ENCODE measurements at regions of chr7 and their contacts with region 1.

Region 1: DNA sequence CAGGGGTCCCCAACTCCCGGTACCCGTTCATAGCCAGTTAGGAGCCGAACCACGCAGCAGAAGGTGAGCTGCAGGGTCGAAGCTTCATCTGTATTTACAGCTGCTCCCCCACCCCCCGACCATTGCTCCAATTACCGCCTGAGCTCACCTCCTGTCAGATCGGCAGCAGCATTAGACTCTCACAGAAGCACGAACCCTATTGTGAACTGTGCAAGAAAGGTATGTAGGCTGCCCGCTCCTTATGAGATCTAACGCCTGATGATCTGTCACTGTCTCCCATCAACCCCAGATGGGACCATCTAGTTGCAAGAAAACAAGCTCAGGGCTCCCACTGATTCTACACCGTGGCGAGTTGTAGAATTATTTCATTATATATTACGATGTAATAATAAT is 14.6 kb upstream of the AZGP1 start:
- DNase-seq: no peak
- ATAC-seq: no peak
- H3K4me3 ChIP-seq: no peak overlapping the region
- H3K27ac ChIP-seq: no peak overlapping the region
- H3K4me1 ChIP-seq: no peaks in the 10 kb centered on the region
- CTCF ChIP-seq: no peak
- EP300 ChIP-seq: no peak
- POLR2A ChIP-seq: no peak
- RAD21 ChIP-seq: no peak

Region 2: DNA sequence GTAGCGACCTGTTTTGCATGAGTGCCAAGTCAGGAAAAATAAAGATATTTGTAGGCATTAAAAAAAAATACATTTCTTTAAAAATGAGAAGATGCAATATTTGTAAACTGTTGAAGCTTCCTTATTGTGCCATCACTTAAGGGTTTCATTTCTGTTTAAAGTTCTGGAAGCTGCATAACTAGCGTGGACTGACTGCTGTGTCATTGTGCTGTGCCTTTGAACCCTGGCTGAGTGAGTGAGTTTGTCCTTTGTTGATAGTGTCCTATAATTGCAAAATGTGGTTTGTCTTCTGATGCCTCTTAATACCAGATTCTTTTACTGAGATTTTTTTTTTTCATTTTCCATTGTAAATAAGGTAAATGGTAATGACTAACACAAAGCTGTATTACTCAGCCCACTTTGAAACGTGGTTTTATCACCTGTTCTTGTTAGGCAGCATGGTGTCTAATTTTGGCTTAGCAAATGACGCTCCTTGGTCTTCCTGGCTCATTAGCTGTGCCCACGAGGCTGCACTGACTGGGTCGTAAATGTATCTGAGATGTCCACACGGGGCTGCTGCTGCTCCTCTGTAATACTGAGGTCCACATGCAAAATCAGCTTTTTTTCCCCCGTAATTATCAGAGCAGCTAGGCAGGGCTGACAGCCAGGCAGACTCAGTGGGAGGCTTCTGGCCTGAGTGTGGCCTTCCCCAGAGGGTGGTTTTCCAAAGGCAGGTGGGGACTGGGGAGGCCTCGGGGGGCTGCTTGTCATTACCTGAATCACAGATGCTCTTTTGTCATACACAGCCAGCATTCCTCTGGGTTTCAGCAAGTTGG is 359.0 kb before region 1 on chr7:
- CTCF ChIA-PET with region 1: interaction called, 39 read pairs
- POLR2A ChIA-PET with region 1: interaction called, 3 read pairs
- DNase-seq: peak; percentile 48 to 56
- ATAC-seq: peak; percentile 86 to 87
- H3K4me3 ChIP-seq: no peak overlapping the region
- H3K27ac ChIP-seq: peak overlapping the region in 1 of 2 experiments; percentile 15; a peak in 2 of 6 replicates
- H3K4me1 ChIP-seq: no peaks in the 10 kb centered on the region
- CTCF ChIP-seq: peak; percentile 63
- EP300 ChIP-seq: no peak
- POLR2A ChIP-seq: no peak
- RAD21 ChIP-seq: peak; percentile 83 to 87

Region 3: GRCh38 chr7:99806839-99807478 is 183.5 kb before region 1 on chr7:
- CTCF ChIA-PET with region 1: no interaction called
- POLR2A ChIA-PET with region 1: no interaction called
- DNase-seq: no peak
- ATAC-seq: no peak
- H3K4me3 ChIP-seq: no peak overlapping the region
- H3K27ac ChIP-seq: no peak overlapping the region
- H3K4me1 ChIP-seq: no peaks in the 10 kb centered on the region
- CTCF ChIP-seq: no peak
- EP300 ChIP-seq: no peak
- POLR2A ChIP-seq: no peak
- RAD21 ChIP-seq: no peak

Region 4: GRCh38 chr7:99928994-99929729 is 61.3 kb before region 1 on chr7 and contains the start of gene GJC3:
- CTCF ChIA-PET with region 1: interaction called, 22 read pairs
- POLR2A ChIA-PET with region 1: no interaction called
- DNase-seq: peak; percentile 75 to 85
- ATAC-seq: peak; percentile 96 to 98
- H3K4me3 ChIP-seq: peak within 1 kb of the TSS; percentile 46
- H3K27ac ChIP-seq: peak within 1 kb of the TSS; percentile 66 to 83
- H3K4me1 ChIP-seq: 0 out of 3 replicates have a peak, but pooled peaks cover 7% of the 10 kb centered on the region
- CTCF ChIP-seq: peak; percentile 54
- EP300 ChIP-seq: no peak
- POLR2A ChIP-seq: no peak
- RAD21 ChIP-seq: peak; percentile 43 to 55
- polyA plus RNA-seq, gene GJC3: 0.30 and 0.36 TPM in 2 replicates

Region 5: GRCh38 chr7:100015232-100016209 is 25.1 kb after region 1 on chr7 and contains the start of gene ZKSCAN1:
- CTCF ChIA-PET with region 1: interaction called, 155 read pairs
- POLR2A ChIA-PET with region 1: interaction called, 6 read pairs
- DNase-seq: peak; percentile 96
- ATAC-seq: peak; percentile 97 to 99
- H3K4me3 ChIP-seq: peak within 1 kb of the TSS; percentile 99
- H3K27ac ChIP-seq: peak within 1 kb of the TSS; percentile 98 to 99
- H3K4me1 ChIP-seq: peaks cover 16% of the 10 kb centered on the region
- CTCF ChIP-seq: no peak
- EP300 ChIP-seq: 0 out of 5 replicates have a peak, but pooled peaks of 1 of the 2 experiments have one; percentile 10
- POLR2A ChIP-seq: peak; percentile 81
- RAD21 ChIP-seq: no peak
- polyA plus RNA-seq, gene ZKSCAN1: 23.9 and 25.7 TPM in 2 replicates

Region 6: GRCh38 chr7:100049441-100050311 is 59.2 kb after region 1 on chr7 and contains the start of gene ZSCAN21:
- CTCF ChIA-PET with region 1: interaction called, 128 read pairs
- POLR2A ChIA-PET with region 1: interaction called, 5 read pairs
- DNase-seq: peak; percentile 79 to 88
- ATAC-seq: peak; percentile 94 to 96
- H3K4me3 ChIP-seq: peak within 1 kb of the TSS; percentile 85
- H3K27ac ChIP-seq: peak within 1 kb of the TSS; percentile 89 to 93
- H3K4me1 ChIP-seq: peaks cover 7% of the 10 kb centered on the region; the same call in 2 of the 3 replicates
- CTCF ChIP-seq: peak; percentile 20; the same call in 1 of the 3 replicates
- EP300 ChIP-seq: no peak
- POLR2A ChIP-seq: peak; percentile 87
- RAD21 ChIP-seq: no peak
- polyA plus RNA-seq, gene ZSCAN21: 17.9 and 18.3 TPM in 2 replicates

Measured in A549 (cell line).